ENCODE measurements at regions of chr4 and their contacts with region 1.

Region 1: GRCh38 chr4:114694770-114695169 is 96.2 kb downstream of the UGT8 start:
- DNase-seq: no peak

Region 2: GRCh38 chr4:114386637-114387233 is 308.0 kb before region 1 on chr4:
- intact Hi-C with region 1: loop called (anchors 2 kb)
- DNase-seq: no peak

Region 3: GRCh38 chr4:114509340-114509739 is 185.4 kb before region 1 on chr4:
- intact Hi-C with region 1: loop called (anchors 5 kb)
- DNase-seq: no peak

Region 4: GRCh38 chr4:115187136-115187535 is 492.4 kb after region 1 on chr4:
- intact Hi-C with region 1: no loop called
- DNase-seq: no peak

Region 5: GRCh38 chr4:115596265-115597001 is 901.7 kb after region 1 on chr4:
- intact Hi-C with region 1: no loop called
- DNase-seq: no peak

Measured in posterior cingulate gyrus (tissue), 11 donors.